ENCODE measurements at regions of chr11 and their contacts with region 1.

Region 1: GRCh38 chr11:55607545-55607944 is at the start of gene OR4C11:
- DNase-seq: no peak
- ATAC-seq: no peak
- H3K4me3 ChIP-seq: no peak within 1 kb of the TSS
- H3K27ac ChIP-seq: no peak within 1 kb of the TSS
- H3K4me1 ChIP-seq: no peaks in the 10 kb centered on the region
- H3K27me3 ChIP-seq: no peaks in the 10 kb centered on the region
- CTCF ChIP-seq: no peak
- total RNA-seq, gene OR4C11: not detected

Region 2: GRCh38 chr11:55367674-55368073 is 239.9 kb before region 1 on chr11 and contains the start of gene OR4A15:
- CTCF ChIA-PET with region 1: no interaction called
- POLR2A ChIA-PET with region 1: no interaction called
- in situ Hi-C with region 1: no loop called
- intact Hi-C with region 1: loop called (anchors 10 kb)
- DNase-seq: no peak
- ATAC-seq: no peak
- H3K4me3 ChIP-seq: no peak within 1 kb of the TSS
- H3K27ac ChIP-seq: no peak within 1 kb of the TSS
- H3K4me1 ChIP-seq: no peaks in the 10 kb centered on the region
- H3K27me3 ChIP-seq: no peaks in the 10 kb centered on the region
- CTCF ChIP-seq: no peak
- total RNA-seq, gene OR4A15: not detected

Region 3: DNA sequence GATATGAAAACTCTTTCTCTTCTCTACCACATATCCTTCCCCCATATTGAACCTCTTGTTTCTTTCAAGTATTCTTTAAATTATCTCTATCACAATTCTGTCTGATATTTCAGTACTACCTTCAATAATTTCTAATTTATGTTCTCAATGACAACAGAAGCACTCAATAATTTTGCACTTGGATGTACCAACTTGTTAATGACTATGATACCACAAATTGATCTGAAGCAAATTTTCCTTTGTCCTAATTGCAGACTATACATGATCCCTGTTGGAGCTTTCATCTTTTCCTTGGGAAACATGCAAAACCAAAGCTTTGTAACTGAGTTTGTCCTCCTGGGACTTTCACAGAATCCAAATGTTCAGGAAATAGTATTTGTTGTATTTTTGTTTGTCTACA is 53.4 kb before region 1 on chr11 and contains the start of gene OR4C15:
- CTCF ChIA-PET with region 1: no interaction called
- POLR2A ChIA-PET with region 1: no interaction called
- in situ Hi-C with region 1: no loop called
- intact Hi-C with region 1: no loop called
- DNase-seq: no peak
- ATAC-seq: no peak
- H3K4me3 ChIP-seq: no peak within 1 kb of the TSS
- H3K27ac ChIP-seq: no peak within 1 kb of the TSS
- H3K4me1 ChIP-seq: no peaks in the 10 kb centered on the region
- H3K27me3 ChIP-seq: no peaks in the 10 kb centered on the region
- CTCF ChIP-seq: no peak
- total RNA-seq, gene OR4C15: not detected

Region 4: DNA sequence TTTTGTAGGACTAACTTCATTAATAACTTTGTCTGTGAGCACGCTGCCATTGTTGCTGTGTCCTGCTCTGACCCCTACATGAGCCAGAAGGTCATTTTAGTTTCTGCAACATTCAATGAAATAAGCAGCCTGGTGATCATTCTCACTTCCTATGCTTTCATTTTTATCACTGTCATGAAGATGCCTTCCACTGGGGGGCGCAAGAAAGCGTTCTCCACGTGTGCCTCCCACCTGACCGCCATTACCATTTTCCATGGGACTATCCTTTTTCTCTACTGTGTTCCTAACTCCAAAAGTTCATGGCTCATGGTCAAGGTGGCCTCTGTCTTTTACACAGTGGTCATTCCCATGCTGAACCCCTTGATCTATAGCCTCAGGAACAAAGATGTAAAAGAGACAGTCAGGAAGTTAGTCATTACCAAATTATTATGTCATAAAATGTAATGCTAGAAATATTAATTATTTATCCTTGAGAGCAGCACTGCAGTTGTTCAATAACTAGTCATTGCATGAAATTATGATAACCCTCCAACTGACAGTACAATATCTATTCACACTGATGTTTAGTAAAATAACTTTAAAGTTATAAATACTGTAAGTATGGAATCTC is 119.3 kb after region 1 on chr11:
- CTCF ChIA-PET with region 1: no interaction called
- POLR2A ChIA-PET with region 1: no interaction called
- in situ Hi-C with region 1: no loop called
- intact Hi-C with region 1: no loop called
- DNase-seq: no peak
- ATAC-seq: no peak
- H3K4me3 ChIP-seq: no peak overlapping the region
- H3K27ac ChIP-seq: no peak overlapping the region
- H3K4me1 ChIP-seq: no peaks in the 10 kb centered on the region
- H3K27me3 ChIP-seq: no peaks in the 10 kb centered on the region
- CTCF ChIP-seq: peak; percentile 37

Region 5: GRCh38 chr11:55914482-55914881 is 306.9 kb after region 1 on chr11 and contains the start of gene OR5W2:
- CTCF ChIA-PET with region 1: no interaction called
- POLR2A ChIA-PET with region 1: no interaction called
- in situ Hi-C with region 1: no loop called
- intact Hi-C with region 1: no loop called
- DNase-seq: no peak
- ATAC-seq: no peak
- H3K4me3 ChIP-seq: no peak within 1 kb of the TSS
- H3K27ac ChIP-seq: no peak within 1 kb of the TSS
- H3K4me1 ChIP-seq: no peaks in the 10 kb centered on the region
- H3K27me3 ChIP-seq: no peaks in the 10 kb centered on the region
- CTCF ChIP-seq: no peak
- total RNA-seq, gene OR5W2: not detected